Heart right ventricle (tissue), 16 donors: ENCODE measurements at regions of chr16 and their contacts with region 1.

Region 1: DNA sequence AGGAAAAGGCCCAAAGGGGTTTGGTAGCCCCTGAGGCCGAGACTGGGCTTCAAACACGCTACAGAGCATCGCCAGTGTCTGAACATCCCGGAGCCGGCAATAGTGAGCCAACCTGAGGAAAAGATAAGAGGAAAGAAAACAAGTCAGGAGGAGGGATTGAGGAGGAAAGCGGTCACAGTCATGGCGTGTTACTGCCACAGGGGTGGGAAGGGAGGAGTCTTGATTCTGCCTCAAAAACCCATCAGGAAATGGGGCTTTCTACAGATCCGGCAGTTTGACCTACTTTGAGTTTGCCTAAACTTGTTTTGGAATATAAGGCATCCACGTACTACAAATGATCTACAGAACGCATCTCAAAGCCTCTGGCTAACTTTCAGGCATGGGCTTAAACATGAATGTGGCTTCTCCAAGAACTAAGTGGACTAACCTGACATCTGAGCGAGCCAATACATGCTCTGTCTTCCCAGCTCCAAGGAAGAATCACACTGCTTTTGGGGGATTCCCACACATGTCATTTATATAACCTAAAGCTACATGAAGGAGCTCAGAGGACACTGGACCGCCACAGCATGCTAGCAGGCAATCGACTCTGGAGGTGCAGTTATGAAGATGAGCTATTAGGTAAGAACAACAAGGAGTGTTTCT is 96.6 kb downstream of the WDR59 start:
- DNase-seq: no peak
- ATAC-seq: no peak
- H3K4me3 ChIP-seq: no peak overlapping the region
- H3K27ac ChIP-seq: no peak overlapping the region
- H3K4me1 ChIP-seq: no peaks in the 10 kb centered on the region
- H3K27me3 ChIP-seq: no peaks in the 10 kb centered on the region
- CTCF ChIP-seq: no peak

Region 2: GRCh38 chr16:74936902-74937560 is 48.7 kb after region 1 on chr16:
- intact Hi-C with region 1: loop called in 1 of 10 experiments (anchors 5 kb)
- DNase-seq: no peak
- ATAC-seq: no peak
- H3K4me3 ChIP-seq: no peak overlapping the region
- H3K27ac ChIP-seq: peak overlapping the region in 1 of 10 donors; percentile 3
- H3K4me1 ChIP-seq: peaks cover 0 to 9% (median 0%) of the 10 kb centered on the region in 9 donors
- H3K27me3 ChIP-seq: no peaks in the 10 kb centered on the region
- CTCF ChIP-seq: no peak